ENCODE measurements at regions of chr1 and their contacts with region 1.

Region 1: GRCh38 chr1:151459331-151460046 is at the start of gene POGZ:
- DNase-seq: peak; percentile 99
- H3K4me3 ChIP-seq: peak within 1 kb of the TSS; percentile 81 to 90 (median 86)
- H3K27ac ChIP-seq: peak within 1 kb of the TSS; percentile 98 to 99 (median 99)
- H3K4me1 ChIP-seq: peaks cover 13 to 38% (median 37%) of the 10 kb centered on the region in 4 donors
- H3K27me3 ChIP-seq: no peaks in the 10 kb centered on the region
- CTCF ChIP-seq: no peak
- EP300 ChIP-seq: no peak
- POLR2A ChIP-seq: no peak
- total RNA-seq, gene POGZ: 35.0 to 63.3 (median 49.1) TPM

Region 2: GRCh38 chr1:151475175-151475574 is 15.7 kb after region 1 on chr1:
- intact Hi-C with region 1: loop called (anchors 2 kb)
- DNase-seq: peak; percentile 10
- H3K4me3 ChIP-seq: no peak overlapping the region
- H3K27ac ChIP-seq: no peak overlapping the region
- H3K4me1 ChIP-seq: peaks cover 6 to 16% (median 10%) of the 10 kb centered on the region in 4 donors
- H3K27me3 ChIP-seq: no peaks in the 10 kb centered on the region
- CTCF ChIP-seq: no peak
- EP300 ChIP-seq: no peak
- POLR2A ChIP-seq: no peak

Region 3: DNA sequence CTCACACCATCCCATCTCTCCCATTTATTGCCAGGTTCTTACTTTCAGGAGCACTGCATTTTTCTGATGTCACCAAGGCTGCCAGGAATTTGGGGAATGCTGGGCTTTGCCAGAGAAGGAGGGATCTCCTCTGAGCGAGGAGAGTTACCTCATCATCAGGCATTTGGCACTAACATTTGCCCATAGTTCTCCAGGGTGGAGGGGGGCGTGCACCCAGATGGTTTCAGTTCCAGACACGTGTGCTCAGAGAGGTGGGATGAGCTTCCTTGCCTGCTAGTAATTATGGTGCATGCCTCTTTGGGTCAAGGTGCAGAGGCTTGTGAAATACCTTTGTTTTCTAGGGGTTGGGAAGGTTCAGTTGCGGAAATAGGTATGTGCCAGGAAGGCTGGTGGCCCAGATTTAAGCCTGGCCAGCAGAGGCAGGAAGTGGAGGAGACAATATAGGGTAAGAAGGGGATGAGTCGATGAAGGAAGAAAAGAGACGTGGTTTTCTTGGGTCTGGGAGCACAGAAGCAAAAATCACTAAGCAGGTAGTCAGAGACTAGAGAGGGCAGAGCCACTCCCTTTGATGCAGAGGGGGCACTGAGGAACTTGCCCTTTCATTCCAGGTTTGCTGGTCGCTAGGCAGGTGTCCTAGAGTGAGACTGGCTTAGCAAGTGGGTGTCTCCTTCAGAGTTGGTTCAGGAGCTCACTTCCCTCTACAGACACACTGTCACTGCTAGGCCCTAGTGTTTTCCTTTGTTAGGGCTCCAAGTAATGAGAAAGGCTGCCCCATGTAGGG is 87.8 kb after region 1 on chr1:
- intact Hi-C with region 1: loop called (anchors 5 kb)
- DNase-seq: no peak
- H3K4me3 ChIP-seq: no peak overlapping the region
- H3K27ac ChIP-seq: peak overlapping the region; percentile 66 to 81 (median 74)
- H3K4me1 ChIP-seq: peaks cover 14 to 53% (median 44%) of the 10 kb centered on the region in 4 donors
- H3K27me3 ChIP-seq: no peaks in the 10 kb centered on the region
- CTCF ChIP-seq: no peak
- EP300 ChIP-seq: no peak
- POLR2A ChIP-seq: no peak

Measured in esophagus muscularis mucosa (tissue), 4 donors.